Pancreas (tissue), 10 donors: ENCODE measurements at regions of chr13 and their contacts with region 1.

Region 1: GRCh38 chr13:19726611-19727010 is 56.1 kb downstream of the PSPC1 start:
- DNase-seq: no peak
- ATAC-seq: no peak
- H3K4me3 ChIP-seq: no peak overlapping the region
- H3K27ac ChIP-seq: no peak overlapping the region
- H3K4me1 ChIP-seq: no peaks in the 10 kb centered on the region
- H3K27me3 ChIP-seq: no peaks in the 10 kb centered on the region
- CTCF ChIP-seq: no peak

Region 2: DNA sequence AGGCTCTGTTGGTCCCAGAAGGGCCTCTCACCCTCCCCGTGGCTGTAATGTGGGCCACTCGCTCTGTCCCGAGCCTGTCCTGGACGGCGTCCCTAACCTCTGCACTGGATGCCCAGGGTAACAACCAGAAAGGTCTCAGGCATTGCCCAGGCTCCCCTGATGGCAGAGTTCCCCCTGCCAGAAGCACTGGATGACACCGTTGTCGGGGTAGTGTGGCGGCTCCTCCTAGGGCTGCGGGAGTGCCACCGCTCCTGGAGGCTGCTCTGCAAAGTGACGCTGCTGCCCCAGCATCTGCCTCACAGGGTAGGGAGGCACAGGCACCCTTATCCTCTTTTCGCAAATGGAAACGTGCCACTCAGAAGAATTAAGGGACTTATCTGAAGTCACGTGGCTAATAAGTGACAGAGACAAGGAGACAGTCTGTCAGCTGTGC is 61.2 kb before region 1 on chr13:
- intact Hi-C with region 1: loop called in 1 of 3 experiments (anchors 10 kb)
- DNase-seq: no peak
- ATAC-seq: peak in 2 of 4 donors; percentile 17 to 27
- H3K4me3 ChIP-seq: no peak overlapping the region
- H3K27ac ChIP-seq: no peak overlapping the region
- H3K4me1 ChIP-seq: no peaks in the 10 kb centered on the region
- H3K27me3 ChIP-seq: no peaks in the 10 kb centered on the region
- CTCF ChIP-seq: no peak